Dendritic cell treated with granulocyte-macrophage colony-stimulating factor and Interleukin-4, amounts not matched to agents 40 ng/mL and 50 ng/mL, for 4 days (primary cell): ENCODE measurements at regions of chr1 and their contacts with region 1.

Region 1: GRCh38 chr1:184945029-184945428 is 29.3 kb downstream of the NIBAN1 start:
- H3K4me3 Mint-ChIP-seq: no peak overlapping the region
- H3K27ac Mint-ChIP-seq: peak overlapping the region; percentile 85
- H3K4me1 Mint-ChIP-seq: peaks cover 53% of the 10 kb centered on the region
- H3K27me3 Mint-ChIP-seq: no peaks in the 10 kb centered on the region

Region 2: DNA sequence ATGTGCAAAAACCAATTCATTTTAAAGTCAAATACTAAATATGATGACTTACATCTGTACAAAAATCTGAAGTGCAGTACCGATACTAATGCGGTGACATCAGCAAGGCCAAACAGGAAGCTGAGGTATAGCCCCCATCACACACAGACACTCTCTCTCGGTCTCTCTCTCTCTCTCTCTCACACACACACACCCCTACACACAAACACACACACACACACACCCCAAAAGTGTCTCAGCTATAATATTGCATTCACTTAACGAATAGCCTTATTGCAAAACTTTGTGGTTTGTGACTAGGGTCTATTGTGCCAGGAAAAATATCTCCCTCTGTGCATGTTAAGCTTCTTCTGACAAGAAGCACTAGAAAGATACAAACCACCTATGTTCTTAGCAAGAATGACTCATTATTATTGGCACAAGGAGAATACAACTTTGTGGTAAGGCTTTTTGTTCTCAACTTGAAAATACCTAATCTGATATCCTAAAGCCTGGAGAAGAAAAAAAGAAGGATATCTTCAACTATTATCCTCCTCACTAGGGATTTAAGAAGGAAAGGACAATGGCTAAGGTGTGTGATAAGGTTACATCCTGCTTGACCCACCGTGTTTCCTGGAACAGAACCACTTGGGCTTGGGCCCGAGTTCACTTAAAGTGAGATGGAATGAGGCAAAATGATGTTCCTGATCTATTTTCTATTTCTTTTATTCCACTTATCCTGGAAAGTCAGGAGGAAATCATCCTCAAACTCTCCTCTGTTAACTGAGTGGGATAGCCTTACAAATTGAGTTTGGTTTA is 77.8 kb before region 1 on chr1:
- intact Hi-C with region 1: no loop called
- H3K4me3 Mint-ChIP-seq: peak overlapping the region; percentile 58
- H3K27ac Mint-ChIP-seq: peak overlapping the region; percentile 82
- H3K4me1 Mint-ChIP-seq: peaks cover 40% of the 10 kb centered on the region
- H3K27me3 Mint-ChIP-seq: no peaks in the 10 kb centered on the region

Region 3: DNA sequence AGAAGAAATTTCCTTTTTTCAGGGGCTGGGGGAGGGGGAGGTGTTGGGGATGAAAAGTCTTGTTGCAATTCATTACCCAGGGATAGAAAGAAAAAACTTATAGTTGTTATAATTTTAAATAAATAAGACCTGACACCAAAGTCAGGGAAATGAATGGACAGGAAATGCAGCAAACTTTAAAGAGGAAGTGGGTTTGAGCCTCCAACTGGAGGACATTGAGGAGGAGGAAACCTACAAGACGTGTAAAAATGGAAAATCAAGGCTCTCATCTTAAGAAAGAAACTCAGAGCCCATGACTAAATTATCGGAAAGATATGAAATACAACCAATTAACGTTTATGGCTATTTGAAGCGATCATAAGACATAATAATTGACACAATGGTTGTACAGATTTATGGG is 25.1 kb before region 1 on chr1:
- intact Hi-C with region 1: loop called (anchors 1 kb)
- H3K4me3 Mint-ChIP-seq: no peak overlapping the region
- H3K27ac Mint-ChIP-seq: no peak overlapping the region
- H3K4me1 Mint-ChIP-seq: peaks cover 35% of the 10 kb centered on the region
- H3K27me3 Mint-ChIP-seq: no peaks in the 10 kb centered on the region